ENCODE measurements at regions of chr22 and their contacts with region 1.

Region 1: GRCh38 chr22:26364066-26365015 is 64.7 kb upstream of the ASPHD2 start:
- DNase-seq: no peak
- H3K4me3 ChIP-seq: no peak overlapping the region
- CTCF ChIP-seq: peak; percentile 71

Region 2: DNA sequence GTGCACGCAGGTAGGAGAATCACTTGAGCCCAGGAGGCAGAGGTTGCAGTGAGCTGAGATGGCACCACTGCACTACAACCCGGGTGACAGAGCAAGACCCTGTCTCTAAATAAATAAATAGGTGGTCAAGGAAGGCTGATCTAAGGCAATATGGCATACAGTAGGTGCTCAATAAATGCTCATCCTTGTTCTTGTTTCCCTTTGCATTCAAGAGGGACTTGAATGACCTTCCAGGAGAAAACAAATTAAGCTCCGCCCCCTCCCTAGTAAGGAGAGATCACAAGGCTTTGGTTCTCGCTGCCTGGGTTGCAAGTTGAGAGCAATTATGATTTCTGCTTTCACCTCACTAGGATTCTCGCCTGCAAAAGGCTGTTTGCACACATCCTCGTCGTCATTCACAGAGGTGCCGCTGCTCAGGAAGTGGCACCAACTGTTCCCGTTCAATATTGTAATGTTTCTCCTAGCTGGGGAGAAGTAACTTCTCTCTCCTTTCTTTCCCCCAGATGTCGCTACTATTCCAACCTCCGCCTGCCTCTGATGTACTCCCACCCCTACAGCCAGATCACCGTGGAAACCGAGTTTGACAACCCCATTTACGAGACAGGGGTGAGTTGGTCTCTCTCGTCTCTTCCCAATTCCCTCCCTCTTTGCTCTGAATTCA is 13.0 kb after region 1 on chr22:
- CTCF ChIA-PET with region 1: interaction called, 137 read pairs
- POLR2A ChIA-PET with region 1: no interaction called
- DNase-seq: no peak
- H3K4me3 ChIP-seq: no peak overlapping the region
- CTCF ChIP-seq: no peak

Region 3: DNA sequence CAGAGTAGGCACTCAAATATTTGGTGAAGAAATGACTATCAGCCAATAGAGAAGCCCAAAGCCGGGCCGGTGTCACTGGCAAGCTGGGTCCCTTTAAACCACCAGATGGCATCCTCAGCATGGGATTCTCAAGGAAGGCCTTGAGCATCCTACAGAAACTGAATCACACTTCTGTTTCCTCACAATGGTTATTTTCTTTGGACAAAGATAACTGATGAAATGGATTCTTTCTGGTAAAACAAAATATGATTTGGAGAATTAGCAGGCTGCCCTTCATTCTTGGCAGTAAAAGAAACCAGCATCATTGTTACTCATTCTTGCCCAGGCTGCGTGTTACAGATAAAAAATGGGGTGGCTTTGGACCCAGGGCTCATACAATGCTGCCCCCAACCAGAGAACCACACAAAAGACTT is 34.4 kb after region 1 on chr22:
- CTCF ChIA-PET with region 1: interaction called, 42 read pairs
- POLR2A ChIA-PET with region 1: no interaction called
- DNase-seq: peak; percentile 23
- H3K4me3 ChIP-seq: no peak overlapping the region
- CTCF ChIP-seq: peak; percentile 75

Region 4: GRCh38 chr22:26428515-26429457 is 64.4 kb after region 1 on chr22 and contains the start of gene ASPHD2:
- CTCF ChIA-PET with region 1: interaction called, 26 read pairs
- POLR2A ChIA-PET with region 1: no interaction called
- DNase-seq: no peak
- H3K4me3 ChIP-seq: peak within 1 kb of the TSS; percentile 69
- CTCF ChIP-seq: no peak

Region 5: DNA sequence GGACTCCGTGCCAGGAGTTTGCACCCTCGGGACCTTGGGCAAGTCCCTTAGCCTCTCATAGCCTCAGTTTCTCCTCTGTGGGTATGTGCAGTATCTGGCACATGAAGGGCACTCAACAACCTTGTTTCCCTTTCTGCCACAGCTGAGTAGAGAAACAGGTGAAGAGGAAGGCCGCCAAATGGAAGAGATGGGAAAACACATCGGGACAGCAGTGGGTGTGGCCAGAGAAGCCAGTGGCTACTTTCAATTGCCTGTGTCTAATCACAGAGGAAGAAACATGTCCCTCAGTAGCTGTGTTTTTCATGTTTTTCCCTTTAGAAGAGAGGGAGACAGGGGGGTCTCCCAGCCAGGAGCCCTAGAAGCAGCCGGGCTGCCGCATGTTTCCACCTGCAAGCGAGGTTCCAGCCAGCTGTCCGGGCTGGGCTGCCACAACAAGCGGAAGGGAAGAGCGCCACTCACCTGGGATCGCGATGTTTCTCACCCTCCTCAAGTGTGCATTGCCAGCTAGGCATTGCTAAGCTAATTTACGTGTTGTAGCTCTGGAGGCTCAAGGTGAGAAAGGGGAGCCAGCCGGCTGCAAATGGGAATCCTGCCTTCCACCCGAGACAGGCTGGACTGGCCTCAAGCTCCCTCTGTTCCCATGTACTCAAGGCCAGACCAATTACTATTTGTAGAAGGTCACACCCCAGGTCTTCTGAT is 81.4 kb after region 1 on chr22:
- CTCF ChIA-PET with region 1: interaction called, 30 read pairs
- POLR2A ChIA-PET with region 1: no interaction called
- DNase-seq: no peak
- H3K4me3 ChIP-seq: no peak overlapping the region
- CTCF ChIP-seq: no peak

Region 6: GRCh38 chr22:26665813-26666231 is 301.5 kb after region 1 on chr22:
- CTCF ChIA-PET with region 1: interaction called, 90 read pairs
- POLR2A ChIA-PET with region 1: no interaction called
- DNase-seq: peak; percentile 52
- H3K4me3 ChIP-seq: no peak overlapping the region
- CTCF ChIP-seq: no peak

Measured in AG04449 (cell line).